ENCODE measurements at regions of chr7 and their contacts with region 1.

Region 1: GRCh38 chr7:55255496-55256435 is 109.4 kb upstream of the LANCL2 start:
- DNase-seq: peak; percentile 86
- ATAC-seq: peak; percentile 93 to 96

Region 2: DNA sequence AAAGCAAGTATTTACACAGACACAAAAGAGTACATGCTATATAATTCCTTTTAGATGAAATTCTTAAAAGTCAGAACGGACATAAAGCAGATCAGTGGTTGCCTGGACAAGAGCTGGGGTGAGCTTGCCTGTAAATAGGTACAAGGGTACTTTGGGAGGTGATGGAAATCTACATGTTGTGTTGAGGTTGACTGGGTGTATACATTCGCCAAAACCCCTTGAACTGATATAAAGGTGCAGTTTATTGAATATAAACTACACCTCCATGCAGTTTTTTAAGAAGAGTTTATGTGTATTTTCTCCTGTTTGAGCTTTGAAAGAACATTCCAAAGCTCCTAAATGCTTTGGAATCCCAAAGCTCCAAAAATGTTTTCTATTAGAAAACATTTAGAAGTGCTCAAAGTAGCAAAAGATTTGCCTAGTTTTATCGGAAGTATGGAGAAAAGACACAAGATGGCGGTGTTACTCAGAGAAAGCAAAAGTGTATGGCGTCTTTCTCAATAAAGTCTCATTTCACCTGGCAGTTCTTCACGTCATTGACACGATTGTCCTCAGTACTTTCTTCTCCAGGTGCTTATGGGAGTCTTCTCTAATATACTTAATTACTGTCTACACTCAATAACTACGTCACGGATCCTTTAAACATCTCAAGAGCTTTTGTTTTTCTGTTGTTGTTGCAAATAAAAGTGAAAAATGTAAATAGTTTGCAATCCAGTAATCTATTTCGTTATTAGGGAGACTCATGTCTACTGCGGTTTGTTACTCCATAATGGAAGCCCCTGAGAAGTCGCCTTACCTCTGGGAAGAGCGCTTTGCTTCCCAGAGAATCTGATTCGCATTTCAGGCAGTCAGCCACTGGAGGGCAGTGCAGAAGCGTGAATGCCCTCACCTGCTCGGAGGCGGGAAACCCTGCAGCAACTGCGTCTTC is 482.0 kb before region 1 on chr7:
- intact Hi-C with region 1: loop called in 1 of 2 experiments (anchors 1 kb)
- DNase-seq: peak; percentile 83
- ATAC-seq: peak; percentile 95 to 98

Region 3: DNA sequence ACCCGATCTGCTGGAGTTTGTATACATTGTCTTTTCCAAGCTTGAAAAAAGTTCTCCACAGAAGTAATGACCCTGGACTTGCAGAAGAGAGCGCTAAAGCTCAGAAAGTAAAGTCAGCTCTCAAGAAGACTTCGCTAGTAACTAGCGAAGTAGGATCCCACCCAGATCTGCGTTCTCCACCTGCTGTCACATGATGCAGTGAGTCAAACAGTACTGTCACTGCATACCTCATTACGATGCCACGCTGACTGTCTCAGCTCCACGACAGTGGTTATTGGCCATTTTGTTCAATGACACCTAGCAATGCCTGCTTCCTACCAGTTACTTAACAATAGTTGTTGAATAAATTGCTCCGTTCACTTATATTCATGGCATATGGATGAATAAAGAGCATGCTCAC is 467.1 kb before region 1 on chr7:
- intact Hi-C with region 1: loop called (anchors 1 to 5 kb)
- DNase-seq: no peak
- ATAC-seq: peak; percentile 81 to 96

Region 4: DNA sequence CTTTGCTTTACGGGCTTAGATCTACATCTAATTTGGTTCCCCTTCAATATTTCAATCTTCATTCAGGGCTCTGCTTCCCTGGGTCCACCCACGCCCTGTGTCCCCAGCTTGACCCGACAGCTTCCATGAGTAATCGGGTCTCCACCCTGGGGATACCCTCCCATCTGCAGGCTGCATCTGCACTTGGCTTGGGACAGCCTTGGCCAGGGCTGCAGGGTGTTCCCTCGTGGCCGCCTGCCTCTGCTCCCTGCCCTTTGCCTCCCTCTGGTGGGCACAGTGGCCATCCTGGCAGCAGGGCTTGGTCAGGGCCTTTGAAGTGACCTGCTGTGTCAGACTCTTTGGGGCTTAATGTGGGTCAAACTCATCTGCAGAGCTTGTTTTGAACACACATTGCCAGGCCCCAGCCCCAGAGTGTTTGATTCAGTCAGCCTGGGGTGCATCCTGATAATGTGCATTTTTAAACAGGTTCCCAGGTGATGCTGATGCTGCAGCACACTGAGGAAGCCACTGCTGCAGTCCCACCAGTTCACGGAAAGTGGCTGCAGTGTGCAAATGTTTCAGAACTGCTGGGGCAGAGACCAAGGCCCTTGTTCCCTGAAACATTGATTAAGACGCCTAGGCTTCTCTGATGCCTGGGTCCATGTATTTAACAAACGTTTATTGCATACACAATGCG is 416.1 kb before region 1 on chr7:
- intact Hi-C with region 1: loop called in 1 of 2 experiments (anchors 10 kb)
- DNase-seq: peak; percentile 84
- ATAC-seq: peak; percentile 82 to 97

Region 5: GRCh38 chr7:55053651-55054571 is 201.9 kb before region 1 on chr7:
- intact Hi-C with region 1: loop called in 1 of 2 experiments (anchors 10 kb)
- DNase-seq: no peak
- ATAC-seq: peak; percentile 12 to 24

Region 6: GRCh38 chr7:55065079-55065478 is 190.7 kb before region 1 on chr7:
- intact Hi-C with region 1: no loop called
- DNase-seq: peak; percentile 60
- ATAC-seq: peak; percentile 60 to 86

Region 7: DNA sequence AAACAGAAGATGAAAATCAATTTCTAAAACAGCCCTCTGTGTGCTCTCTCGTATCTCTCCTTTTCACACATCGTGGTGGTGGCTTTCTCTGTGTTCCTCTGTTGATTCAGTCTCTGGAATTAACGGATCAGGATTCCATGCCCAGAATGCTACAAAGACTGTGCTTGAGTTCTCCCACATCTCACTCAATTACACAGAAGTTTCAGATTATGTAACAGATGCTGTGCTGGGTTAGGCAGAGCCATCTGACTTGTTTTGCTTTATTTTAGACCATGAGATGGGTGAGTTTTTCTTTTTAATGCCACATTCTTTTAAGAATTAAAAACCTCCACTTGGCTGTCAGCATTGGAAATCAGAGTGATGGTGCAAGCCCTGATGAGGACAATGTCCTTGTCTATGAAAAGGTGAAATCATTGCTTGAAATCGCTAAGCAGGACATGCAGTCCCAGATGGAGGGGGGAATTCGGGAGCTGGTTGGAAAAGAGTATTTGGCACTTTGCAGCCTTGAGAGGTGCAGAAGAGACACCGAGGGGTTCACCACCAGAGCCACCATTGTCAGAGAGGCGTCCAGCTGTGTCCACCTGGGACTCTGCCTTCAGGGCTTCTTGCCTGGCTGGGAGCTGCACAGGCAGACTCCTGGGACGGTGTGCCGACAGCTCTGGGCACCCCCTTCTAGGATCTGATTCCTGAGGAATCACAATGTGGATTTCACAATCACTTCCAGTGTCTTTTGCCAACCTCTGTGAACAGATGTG is 156.5 kb before region 1 on chr7:
- intact Hi-C with region 1: loop called in 1 of 2 experiments (anchors 10 kb)
- DNase-seq: no peak
- ATAC-seq: peak; percentile 32 to 41

Region 8: GRCh38 chr7:55449205-55449991 is 193.6 kb after region 1 on chr7:
- intact Hi-C with region 1: no loop called
- DNase-seq: no peak
- ATAC-seq: no peak